PC-9 (cell line): ENCODE measurements at regions of chr7 and their contacts with region 1.

Region 1: GRCh38 chr7:155257482-155258225 is 40.0 kb upstream of the INSIG1 start:
- DNase-seq: peak; percentile 34 to 35
- H3K4me3 ChIP-seq: no peak overlapping the region
- H3K27ac ChIP-seq: no peak overlapping the region
- H3K4me1 ChIP-seq: peaks cover 14% of the 10 kb centered on the region
- H3K27me3 ChIP-seq: peaks cover 18% of the 10 kb centered on the region
- CTCF ChIP-seq: no peak

Region 2: DNA sequence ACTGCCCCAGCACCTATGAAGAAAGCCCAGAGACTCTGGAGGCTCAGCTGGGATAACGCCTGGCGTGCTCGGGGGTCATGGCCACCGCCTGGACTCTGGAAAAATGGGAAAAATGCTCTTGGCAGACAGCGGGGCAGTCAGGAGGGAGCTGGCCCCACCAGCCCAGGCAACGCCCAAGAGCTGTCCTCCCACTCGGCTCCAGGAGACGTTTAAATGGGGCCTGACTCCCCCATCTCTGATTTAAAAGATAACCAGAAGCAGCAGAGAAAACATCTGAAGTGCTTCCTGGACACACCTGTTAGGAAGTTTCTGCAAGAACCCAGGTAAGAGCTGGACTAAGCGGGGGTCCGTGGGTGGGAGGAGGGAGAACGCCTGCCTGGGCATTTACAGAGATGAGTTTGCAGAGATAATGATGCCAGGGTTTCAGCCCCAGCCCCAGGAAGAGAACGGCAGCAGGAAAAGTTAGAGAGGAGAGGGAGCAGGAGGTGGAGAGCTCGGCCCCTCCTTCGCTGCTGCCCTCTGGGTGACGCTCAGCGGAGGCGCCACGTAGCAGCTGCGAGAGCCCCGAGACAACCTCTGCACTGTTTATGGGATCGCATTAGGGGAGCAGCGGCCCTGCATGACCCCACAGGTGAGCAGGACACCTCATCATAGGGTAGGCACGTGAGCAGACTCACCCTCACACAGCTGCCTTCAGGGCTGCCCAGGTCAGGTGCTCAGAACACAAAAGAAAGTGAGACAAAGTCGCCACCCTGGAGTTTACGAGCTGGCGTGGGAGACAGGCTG is 43.5 kb before region 1 on chr7:
- CTCF ChIA-PET with region 1: no interaction called
- POLR2A ChIA-PET with region 1: no interaction called
- intact Hi-C with region 1: loop called (anchors 2 kb)
- DNase-seq: peak; percentile 69 to 78
- H3K4me3 ChIP-seq: peak overlapping the region; percentile 57
- H3K27ac ChIP-seq: peak overlapping the region; percentile 30
- H3K4me1 ChIP-seq: peaks cover 42% of the 10 kb centered on the region
- H3K27me3 ChIP-seq: no peaks in the 10 kb centered on the region
- CTCF ChIP-seq: no peak

Region 3: DNA sequence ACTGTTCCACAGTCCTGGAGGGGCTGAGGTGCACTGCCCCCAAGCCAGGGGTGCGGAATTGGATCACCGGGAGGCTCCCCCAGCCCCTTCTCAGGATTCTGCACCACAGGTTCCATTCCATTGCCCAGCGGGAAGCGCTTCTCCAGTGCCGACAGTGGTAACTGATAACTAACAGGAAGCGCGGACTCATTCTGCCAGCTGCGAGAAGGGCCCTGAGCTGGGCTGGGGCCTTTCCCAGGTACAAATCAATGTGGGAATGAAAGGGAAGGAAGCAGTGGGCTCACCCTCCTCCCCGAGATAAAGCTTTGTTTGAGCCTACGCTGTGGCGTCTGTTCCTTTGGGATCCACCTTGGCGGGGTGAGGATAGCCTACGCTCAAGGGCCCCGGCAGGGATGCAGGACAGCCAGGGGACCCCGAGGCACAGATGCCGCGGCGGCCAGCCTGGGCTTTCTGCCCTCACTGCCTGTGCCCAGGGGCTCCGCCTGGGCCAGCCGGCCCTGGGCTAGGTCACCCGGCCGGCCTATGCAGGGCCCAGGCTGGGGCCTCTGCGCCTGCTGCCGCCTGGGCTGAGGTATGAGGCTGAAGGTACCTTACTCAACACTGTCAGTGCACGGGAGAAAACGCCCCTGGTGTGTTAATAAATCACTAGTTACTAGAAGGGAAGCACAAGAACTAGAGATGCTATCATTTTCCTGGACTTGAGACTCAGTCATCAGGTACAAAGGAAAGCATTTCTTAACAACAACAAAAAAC is 239.7 kb after region 1 on chr7:
- CTCF ChIA-PET with region 1: no interaction called
- POLR2A ChIA-PET with region 1: no interaction called
- intact Hi-C with region 1: no loop called
- DNase-seq: no peak
- H3K4me3 ChIP-seq: no peak overlapping the region
- H3K27ac ChIP-seq: no peak overlapping the region
- H3K4me1 ChIP-seq: no peaks in the 10 kb centered on the region
- H3K27me3 ChIP-seq: peaks cover 99% of the 10 kb centered on the region
- CTCF ChIP-seq: no peak